Ascending aorta (tissue), 2 donors: ENCODE measurements at regions of chr4 and their contacts with region 1.

Region 1: DNA sequence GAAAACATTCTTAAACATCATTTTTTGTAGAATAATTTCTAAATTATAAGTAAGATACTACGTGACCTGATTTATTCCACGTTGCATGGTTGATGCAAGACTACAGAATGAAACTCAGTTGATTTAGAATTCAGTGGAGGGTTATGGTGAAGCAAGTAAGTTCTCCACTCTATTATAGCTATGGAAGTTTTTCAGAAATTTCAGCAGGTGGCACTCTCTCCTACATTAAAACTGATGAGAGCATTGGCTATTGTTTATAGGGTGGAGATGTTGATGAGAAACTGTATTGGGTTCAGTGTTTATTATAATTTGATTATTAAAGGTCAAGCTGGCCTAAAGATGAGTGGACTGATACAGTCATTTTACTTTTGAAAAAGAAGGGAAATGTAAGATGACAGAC is 88.0 kb downstream of the FNIP2 start:
- DNase-seq: no peak
- H3K4me3 ChIP-seq: no peak overlapping the region
- H3K27ac ChIP-seq: no peak overlapping the region
- H3K4me1 ChIP-seq: no peaks in the 10 kb centered on the region
- H3K27me3 ChIP-seq: no peaks in the 10 kb centered on the region
- CTCF ChIP-seq: peak; percentile 39 to 56 (median 46)

Region 2: DNA sequence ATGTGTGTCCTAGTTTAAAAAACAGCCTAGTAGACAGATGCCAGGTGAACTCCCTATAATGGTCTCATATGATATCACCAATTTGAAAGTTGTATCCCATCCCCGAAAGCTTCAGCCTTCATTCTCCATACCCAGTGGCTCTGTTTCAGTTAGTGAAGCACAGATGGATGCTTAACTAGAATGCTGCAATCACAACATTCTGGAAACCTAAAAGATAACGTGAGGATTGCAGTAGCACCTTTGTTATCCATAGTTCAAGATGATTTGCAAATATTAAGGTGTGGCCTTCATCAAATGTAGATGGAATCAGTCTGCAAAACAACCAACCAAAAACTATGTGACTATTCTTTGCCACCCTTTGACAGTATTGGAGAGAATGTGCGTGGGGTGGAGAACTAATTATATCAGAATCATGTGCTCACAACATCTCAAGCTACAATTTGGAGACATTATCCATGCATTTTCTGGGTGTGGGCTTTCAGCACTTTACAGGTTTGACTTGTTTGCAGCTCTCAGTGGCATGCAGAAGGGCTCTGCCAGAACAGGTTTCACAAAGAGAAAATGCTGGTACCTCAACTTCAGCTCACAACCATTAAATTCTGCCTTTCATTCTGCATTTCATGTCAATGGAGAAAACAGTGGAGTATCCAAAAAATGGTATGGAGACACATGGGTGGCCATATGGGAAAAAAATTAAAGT is 115.4 kb before region 1 on chr4:
- intact Hi-C with region 1: no loop called
- DNase-seq: no peak
- H3K4me3 ChIP-seq: no peak overlapping the region
- H3K27ac ChIP-seq: no peak overlapping the region
- H3K4me1 ChIP-seq: no peaks in the 10 kb centered on the region
- H3K27me3 ChIP-seq: no peaks in the 10 kb centered on the region
- CTCF ChIP-seq: no peak

Region 3: DNA sequence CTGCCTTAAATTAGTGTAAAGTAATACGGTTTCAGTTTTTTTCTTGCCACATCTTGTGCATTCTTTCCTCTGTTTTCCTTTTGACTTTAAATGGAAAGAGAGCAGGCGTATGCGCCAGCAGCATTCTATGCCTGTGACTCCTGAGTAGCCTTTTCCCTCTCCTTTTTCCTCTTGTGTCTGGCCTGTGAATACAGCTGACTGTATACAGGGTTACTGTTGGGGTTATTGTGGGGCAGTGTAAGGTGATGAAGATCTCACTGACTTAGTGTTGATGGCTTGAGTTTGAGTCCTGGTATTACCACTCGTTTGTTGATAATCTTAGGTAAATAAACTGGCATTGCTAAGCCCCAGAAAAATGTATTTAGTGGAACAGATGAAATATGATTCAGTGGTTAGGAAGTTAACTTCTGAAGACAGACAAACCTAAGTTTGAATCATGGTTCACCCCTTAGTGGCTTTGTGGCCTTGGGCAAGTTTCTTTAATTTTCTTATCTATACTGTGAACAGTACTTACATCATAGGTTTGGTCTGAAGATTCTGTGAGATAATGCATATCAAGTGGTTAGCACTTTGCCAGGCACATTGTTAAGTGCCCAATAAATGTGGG is 17.0 kb after region 1 on chr4:
- intact Hi-C with region 1: no loop called
- DNase-seq: no peak
- H3K4me3 ChIP-seq: no peak overlapping the region
- H3K27ac ChIP-seq: peak overlapping the region; percentile 31 to 46
- H3K4me1 ChIP-seq: peaks cover 5 to 24% of the 10 kb centered on the region in 2 donors
- H3K27me3 ChIP-seq: no peaks in the 10 kb centered on the region
- CTCF ChIP-seq: no peak

Region 4: GRCh38 chr4:159117968-159118367 is 261.1 kb after region 1 on chr4:
- intact Hi-C with region 1: no loop called
- DNase-seq: no peak
- H3K4me3 ChIP-seq: no peak overlapping the region
- H3K27ac ChIP-seq: no peak overlapping the region
- H3K4me1 ChIP-seq: peaks cover 0 to 2% of the 10 kb centered on the region in 2 donors
- H3K27me3 ChIP-seq: no peaks in the 10 kb centered on the region
- CTCF ChIP-seq: no peak

Region 5: DNA sequence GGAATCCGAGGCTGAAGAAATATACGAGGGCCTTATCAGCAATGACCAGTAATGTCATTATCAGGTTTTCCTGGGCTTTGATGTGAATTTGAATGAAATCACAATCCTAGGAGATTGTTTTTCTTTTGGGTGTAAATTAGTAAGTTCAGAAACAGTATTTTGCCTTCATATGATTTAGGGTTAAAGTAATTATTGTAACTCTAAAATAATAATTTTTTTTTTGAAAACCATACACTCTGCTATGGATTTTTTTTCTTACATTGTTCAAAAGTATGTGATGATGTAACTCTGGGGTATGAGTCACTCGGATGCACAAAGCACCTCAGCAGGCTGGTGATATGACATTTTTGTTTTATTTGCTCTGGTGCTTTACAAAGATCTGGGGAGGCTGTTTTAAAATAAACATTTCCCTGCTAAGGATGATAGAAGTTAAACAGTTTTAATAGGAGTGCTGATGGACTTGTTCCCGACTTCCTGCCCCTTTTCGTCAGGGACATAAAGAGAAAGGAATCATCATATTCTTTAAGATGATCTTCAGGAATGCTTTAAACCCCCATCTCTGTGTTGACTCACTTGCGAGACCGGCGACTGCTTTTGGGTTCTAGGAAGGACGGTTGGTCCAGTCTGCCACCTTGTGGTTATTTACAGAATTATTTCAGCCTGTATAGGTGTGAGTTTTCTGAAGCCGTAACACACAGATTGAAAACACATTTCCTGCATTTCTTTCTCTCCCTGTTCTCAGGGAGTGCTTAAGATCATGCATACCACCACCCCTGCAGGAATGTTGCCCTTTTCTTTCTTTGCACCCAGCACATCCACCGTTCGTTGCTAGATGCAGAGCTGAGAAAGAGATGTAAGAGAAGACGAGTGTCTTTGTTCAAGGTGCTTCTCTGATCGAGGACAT is 318.5 kb after region 1 on chr4:
- intact Hi-C with region 1: loop called (anchors 1 kb)
- DNase-seq: peak in 1 of 2 donors; percentile 79
- H3K4me3 ChIP-seq: peak overlapping the region in 1 of 2 donors; percentile 33
- H3K27ac ChIP-seq: peak overlapping the region in 1 of 2 donors; percentile 44
- H3K4me1 ChIP-seq: peaks cover 6 to 30% of the 10 kb centered on the region in 2 donors
- H3K27me3 ChIP-seq: no peaks in the 10 kb centered on the region
- CTCF ChIP-seq: peak; percentile 75 to 86 (median 80)

Region 6: GRCh38 chr4:159206427-159206871 is 349.6 kb after region 1 on chr4:
- intact Hi-C with region 1: loop called (anchors 1 kb)
- DNase-seq: no peak
- H3K4me3 ChIP-seq: no peak overlapping the region
- H3K27ac ChIP-seq: peak overlapping the region in 1 of 2 donors; percentile 10
- H3K4me1 ChIP-seq: peaks cover 0 to 15% of the 10 kb centered on the region in 2 donors
- H3K27me3 ChIP-seq: no peaks in the 10 kb centered on the region
- CTCF ChIP-seq: no peak